Posterior vena cava (tissue), 2 donors: ENCODE measurements at regions of chr5 and their contacts with region 1.

Region 1: GRCh38 chr5:74673011-74673790 is 11.8 kb upstream of the HEXB start:
- DNase-seq: no peak

Region 2: DNA sequence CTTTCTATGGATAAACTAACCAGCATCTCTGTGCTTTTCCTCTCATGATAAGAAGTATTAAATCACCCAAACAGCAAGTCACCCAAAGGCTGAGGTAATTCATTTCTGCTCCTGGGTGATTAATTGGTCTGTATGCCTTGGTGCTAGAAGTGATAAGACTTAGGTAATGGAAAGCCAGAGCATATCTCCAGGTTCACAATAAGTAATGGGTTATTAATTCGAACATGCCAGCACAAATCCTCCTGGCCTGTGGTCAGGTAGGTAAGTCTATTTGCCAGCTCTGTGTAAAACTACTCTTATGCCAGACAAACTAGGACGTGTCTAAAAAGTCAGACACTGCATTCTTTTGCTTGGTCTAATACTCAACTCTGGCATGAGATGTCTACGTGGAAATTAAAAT is 21.5 kb before region 1 on chr5:
- intact Hi-C with region 1: no loop called
- DNase-seq: no peak

Region 3: DNA sequence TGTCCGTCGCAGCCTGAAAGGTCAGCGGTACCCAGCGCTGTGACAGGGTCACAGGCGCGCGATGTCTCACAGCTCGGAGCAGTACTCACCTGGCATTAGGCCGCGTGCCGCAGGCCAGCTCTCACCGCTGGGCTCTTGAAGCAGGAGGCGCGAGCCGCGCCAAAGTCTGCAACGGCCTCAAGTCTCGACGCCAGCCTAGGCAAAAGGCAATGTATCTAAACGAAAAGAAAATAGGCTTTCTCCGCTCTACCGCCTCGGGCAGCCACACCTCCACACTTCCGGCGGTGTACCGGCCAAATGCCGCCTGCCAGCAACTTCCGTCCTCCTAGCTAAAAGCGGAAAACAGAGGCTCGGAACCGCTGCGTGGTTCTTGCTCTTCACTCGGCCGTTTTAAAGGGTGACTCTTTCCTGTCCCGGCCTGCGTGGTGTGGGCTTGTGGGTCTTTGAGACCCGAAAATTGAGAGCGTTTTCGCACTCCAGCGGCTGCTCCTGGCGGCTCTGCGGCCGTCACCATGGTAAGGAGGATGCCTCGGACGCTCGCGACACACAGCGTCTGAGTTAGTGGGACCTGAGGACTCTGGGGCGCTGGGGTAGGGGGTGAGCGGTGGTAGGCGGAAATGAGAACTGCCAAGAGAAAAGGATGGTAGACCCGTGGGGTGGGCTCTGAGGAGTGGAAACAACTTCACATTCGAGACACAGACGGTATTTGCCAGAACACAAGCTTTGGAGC is 93.8 kb after region 1 on chr5 and contains the starts of genes GFM2 and NSA2:
- intact Hi-C with region 1: no loop called
- DNase-seq: peak; percentile 98
- total RNA-seq, gene GFM2: 12.9 to 16.1 TPM
- total RNA-seq, gene NSA2: 54.8 to 82.8 TPM

Region 4: GRCh38 chr5:74919487-74919886 is 246.3 kb after region 1 on chr5:
- intact Hi-C with region 1: loop called (anchors 5 to 10 kb)
- DNase-seq: no peak